Gastrocnemius medialis (tissue), 4 donors: ENCODE measurements at regions of chr22 and their contacts with region 1.

Region 1: GRCh38 chr22:40525249-40525884 is 111.2 kb downstream of the MRTFA start:
- DNase-seq: peak in 1 of 2 donors; percentile 26
- ATAC-seq: no peak
- H3K4me3 ChIP-seq: no peak overlapping the region
- H3K27ac ChIP-seq: no peak overlapping the region
- H3K4me1 ChIP-seq: peaks cover 0 to 8% of the 10 kb centered on the region in 2 donors
- H3K27me3 ChIP-seq: no peaks in the 10 kb centered on the region
- CTCF ChIP-seq: peak; percentile 52 to 75 (median 55)
- POLR2A ChIP-seq: no peak

Region 2: DNA sequence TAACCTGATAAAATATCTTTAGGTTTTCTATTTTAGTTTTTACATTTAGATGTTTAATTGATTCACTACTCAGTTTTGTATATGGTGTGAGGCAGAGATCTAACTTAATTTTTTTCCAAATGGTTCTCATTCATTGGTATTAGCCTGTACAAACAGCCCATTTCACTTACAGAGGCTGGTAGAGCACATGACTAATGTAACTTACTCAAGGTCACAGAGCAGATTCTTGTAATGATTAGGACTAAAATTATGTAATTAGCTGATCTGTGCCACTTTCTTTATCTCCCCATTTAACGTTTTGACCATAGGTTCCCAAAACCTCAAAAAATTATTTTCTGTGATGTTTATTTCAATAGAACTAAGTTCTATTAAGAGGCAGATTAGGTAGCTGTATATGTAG is 364.2 kb before region 1 on chr22:
- in situ Hi-C with region 1: no loop called
- intact Hi-C with region 1: no loop called
- DNase-seq: no peak
- ATAC-seq: no peak
- H3K4me3 ChIP-seq: no peak overlapping the region
- H3K27ac ChIP-seq: no peak overlapping the region
- H3K4me1 ChIP-seq: peaks cover 8 to 9% of the 10 kb centered on the region in 2 donors
- H3K27me3 ChIP-seq: no peaks in the 10 kb centered on the region
- CTCF ChIP-seq: no peak
- POLR2A ChIP-seq: no peak

Region 3: GRCh38 chr22:40463017-40463631 is 62.2 kb before region 1 on chr22:
- in situ Hi-C with region 1: no loop called
- intact Hi-C with region 1: no loop called
- DNase-seq: no peak
- ATAC-seq: no peak
- H3K4me3 ChIP-seq: peak overlapping the region in 1 of 4 donors; percentile 23
- H3K27ac ChIP-seq: peak overlapping the region in 1 of 4 donors; percentile 6
- H3K4me1 ChIP-seq: peaks cover 10 to 16% of the 10 kb centered on the region in 2 donors
- H3K27me3 ChIP-seq: no peaks in the 10 kb centered on the region
- CTCF ChIP-seq: no peak
- POLR2A ChIP-seq: no peak

Region 4: GRCh38 chr22:40645579-40646197 is 120.3 kb after region 1 on chr22:
- in situ Hi-C with region 1: loop called in 3 of 4 experiments (anchors 5 to 10 kb)
- intact Hi-C with region 1: loop called (anchors 2 kb)
- DNase-seq: no peak
- ATAC-seq: no peak
- H3K4me3 ChIP-seq: no peak overlapping the region
- H3K27ac ChIP-seq: peak overlapping the region in 3 of 4 donors; percentile 69 to 79 (median 71)
- H3K4me1 ChIP-seq: peaks cover 3 to 5% of the 10 kb centered on the region in 2 donors
- H3K27me3 ChIP-seq: no peaks in the 10 kb centered on the region
- CTCF ChIP-seq: no peak
- POLR2A ChIP-seq: no peak